Psoas muscle (tissue), 8 donors: ENCODE measurements at regions of chr6 and their contacts with region 1.

Region 1: GRCh38 chr6:108782179-108783041 is 65.8 kb upstream of the ARMC2 start:
- DNase-seq: peak; percentile 81 to 91
- ATAC-seq: peak; percentile 94 to 98 (median 96)
- H3K4me3 ChIP-seq: peak overlapping the region; percentile 65
- H3K27ac ChIP-seq: peak overlapping the region; percentile 13
- H3K4me1 ChIP-seq: peaks cover 3% of the 10 kb centered on the region
- H3K27me3 ChIP-seq: no peaks in the 10 kb centered on the region
- CTCF ChIP-seq: peak; percentile 68

Region 2: GRCh38 chr6:108650781-108651180 is 131.6 kb before region 1 on chr6:
- intact Hi-C with region 1: no loop called
- DNase-seq: no peak
- ATAC-seq: peak; percentile 5 to 44 (median 25)
- H3K4me3 ChIP-seq: no peak overlapping the region
- H3K27ac ChIP-seq: peak overlapping the region; percentile 84
- H3K4me1 ChIP-seq: peaks cover 92% of the 10 kb centered on the region
- H3K27me3 ChIP-seq: no peaks in the 10 kb centered on the region
- CTCF ChIP-seq: no peak

Region 3: GRCh38 chr6:108820006-108820405 is 37.6 kb after region 1 on chr6:
- intact Hi-C with region 1: no loop called
- DNase-seq: no peak
- ATAC-seq: no peak
- H3K4me3 ChIP-seq: no peak overlapping the region
- H3K27ac ChIP-seq: no peak overlapping the region
- H3K4me1 ChIP-seq: peaks cover 4% of the 10 kb centered on the region
- H3K27me3 ChIP-seq: no peaks in the 10 kb centered on the region
- CTCF ChIP-seq: no peak

Region 4: GRCh38 chr6:108835218-108835850 is 52.9 kb after region 1 on chr6:
- intact Hi-C with region 1: loop called in 1 of 2 experiments (anchors 5 kb)
- DNase-seq: peak; percentile 88 to 93
- ATAC-seq: peak; percentile 97 to 99 (median 98)
- H3K4me3 ChIP-seq: no peak overlapping the region
- H3K27ac ChIP-seq: no peak overlapping the region
- H3K4me1 ChIP-seq: no peaks in the 10 kb centered on the region
- H3K27me3 ChIP-seq: no peaks in the 10 kb centered on the region
- CTCF ChIP-seq: peak; percentile 97